Activated CD8-positive, alpha-beta memory T cell treated with anti-CD3 and anti-CD28 coated beads, Interleukin-2, amount 10 ng/mL, durations not matched to agents 7 days and 5 days (primary cell): ENCODE measurements at regions of chr1 and their contacts with region 1.

Region 1: GRCh38 chr1:180863158-180863775 is 49.4 kb upstream of the KIAA1614 start:
- DNase-seq: no peak
- ATAC-seq: no peak
- H3K4me3 Mint-ChIP-seq: no peak overlapping the region
- H3K27ac Mint-ChIP-seq: no peak overlapping the region
- H3K4me1 Mint-ChIP-seq: no peaks in the 10 kb centered on the region
- H3K27me3 Mint-ChIP-seq: no peaks in the 10 kb centered on the region

Region 2: GRCh38 chr1:180515864-180516388 is 347.3 kb before region 1 on chr1:
- CTCF ChIA-PET with region 1: interaction called, 69 read pairs
- DNase-seq: peak; percentile 68
- ATAC-seq: peak; percentile 98
- H3K4me3 Mint-ChIP-seq: no peak overlapping the region
- H3K27ac Mint-ChIP-seq: no peak overlapping the region
- H3K4me1 Mint-ChIP-seq: peaks cover 5% of the 10 kb centered on the region
- H3K27me3 Mint-ChIP-seq: peaks cover 8% of the 10 kb centered on the region

Region 3: DNA sequence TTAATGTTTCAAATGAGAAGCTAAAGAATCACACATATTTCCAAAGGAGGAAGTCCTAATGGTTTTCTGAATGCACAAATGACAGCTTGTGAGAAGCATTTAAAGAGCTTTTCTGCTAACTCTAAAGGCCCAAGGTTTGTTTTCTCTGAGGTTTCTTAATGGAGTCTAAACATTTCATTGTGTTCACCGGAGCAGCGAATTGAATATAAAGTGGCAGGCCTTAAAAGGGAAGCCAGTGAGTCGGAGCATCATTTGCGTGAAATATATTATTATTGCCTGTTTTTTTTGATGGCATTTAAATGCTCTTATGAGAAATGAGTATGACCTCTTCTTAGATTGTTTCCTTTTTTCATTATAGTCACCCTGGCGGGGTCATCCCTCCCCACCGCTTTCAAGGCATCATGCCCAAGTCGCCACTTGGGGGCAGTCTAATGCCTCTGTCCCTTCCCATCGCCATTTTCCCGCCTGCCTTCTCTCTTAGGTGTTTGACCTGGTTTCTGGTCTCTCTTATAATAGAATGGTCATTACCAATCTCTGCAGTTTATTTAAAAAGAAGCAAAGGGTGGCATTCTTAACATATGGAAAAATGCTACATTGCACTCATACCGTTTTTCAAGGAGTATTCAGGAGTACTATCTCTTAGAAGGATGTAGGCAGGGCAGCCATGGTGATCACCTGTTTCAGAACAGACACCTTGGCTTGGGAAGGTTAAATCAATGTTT is 329.8 kb before region 1 on chr1:
- CTCF ChIA-PET with region 1: interaction called, 78 read pairs
- DNase-seq: peak; percentile 78
- ATAC-seq: peak; percentile 70
- H3K4me3 Mint-ChIP-seq: no peak overlapping the region
- H3K27ac Mint-ChIP-seq: no peak overlapping the region
- H3K4me1 Mint-ChIP-seq: no peaks in the 10 kb centered on the region
- H3K27me3 Mint-ChIP-seq: peaks cover 30% of the 10 kb centered on the region

Region 4: GRCh38 chr1:180586671-180587155 is 276.6 kb before region 1 on chr1:
- CTCF ChIA-PET with region 1: interaction called, 11 read pairs
- DNase-seq: no peak
- ATAC-seq: no peak
- H3K4me3 Mint-ChIP-seq: no peak overlapping the region
- H3K27ac Mint-ChIP-seq: peak overlapping the region; percentile 67
- H3K4me1 Mint-ChIP-seq: peaks cover 24% of the 10 kb centered on the region
- H3K27me3 Mint-ChIP-seq: peaks cover 4% of the 10 kb centered on the region

Region 5: GRCh38 chr1:180631766-180632325 is 231.4 kb before region 1 on chr1 and contains the start of gene XPR1:
- CTCF ChIA-PET with region 1: interaction called, 10 read pairs
- DNase-seq: peak; percentile 99
- ATAC-seq: peak; percentile 98
- H3K4me3 Mint-ChIP-seq: no peak within 1 kb of the TSS
- H3K27ac Mint-ChIP-seq: peak within 1 kb of the TSS; percentile 86
- H3K4me1 Mint-ChIP-seq: peaks cover 6% of the 10 kb centered on the region
- H3K27me3 Mint-ChIP-seq: peaks cover 5% of the 10 kb centered on the region
- total RNA-seq, gene XPR1: 17.6 to 21.9 TPM

Region 6: DNA sequence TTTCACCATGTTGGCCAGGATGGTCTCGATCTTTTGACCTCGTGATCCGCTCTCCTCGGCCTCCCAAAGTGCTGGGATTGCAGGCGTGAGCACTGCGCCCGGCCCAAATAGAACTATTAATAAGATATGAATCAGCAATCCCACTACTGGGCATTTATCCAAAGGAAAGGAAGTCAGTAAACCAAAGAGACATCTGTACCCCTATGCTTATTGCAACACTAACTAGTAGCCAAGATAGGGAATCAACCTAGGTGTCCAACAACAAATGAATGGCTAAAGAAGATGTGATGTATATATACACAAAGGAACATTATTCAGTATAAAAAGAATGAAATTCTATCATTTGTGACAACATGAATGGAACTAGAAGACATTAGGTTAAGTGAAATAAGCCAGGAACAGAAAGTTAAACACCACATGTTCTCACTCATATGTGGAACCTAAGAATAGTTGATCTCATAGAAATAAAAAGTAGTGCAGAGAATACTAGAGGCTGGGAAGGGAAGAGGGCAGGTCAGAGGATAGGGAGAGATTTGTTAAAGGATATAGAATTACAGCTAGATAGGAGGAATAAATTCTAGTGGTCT is 182.6 kb before region 1 on chr1:
- CTCF ChIA-PET with region 1: no interaction called
- DNase-seq: no peak
- ATAC-seq: no peak
- H3K4me3 Mint-ChIP-seq: no peak overlapping the region
- H3K27ac Mint-ChIP-seq: no peak overlapping the region
- H3K4me1 Mint-ChIP-seq: no peaks in the 10 kb centered on the region
- H3K27me3 Mint-ChIP-seq: no peaks in the 10 kb centered on the region

Region 7: GRCh38 chr1:180851995-180852887 is 11.0 kb before region 1 on chr1:
- CTCF ChIA-PET with region 1: interaction called, 16 read pairs
- DNase-seq: no peak
- ATAC-seq: peak; percentile 36
- H3K4me3 Mint-ChIP-seq: no peak overlapping the region
- H3K27ac Mint-ChIP-seq: no peak overlapping the region
- H3K4me1 Mint-ChIP-seq: peaks cover 14% of the 10 kb centered on the region
- H3K27me3 Mint-ChIP-seq: no peaks in the 10 kb centered on the region

Region 8: GRCh38 chr1:180881806-180882509 is 18.7 kb after region 1 on chr1:
- CTCF ChIA-PET with region 1: interaction called, 12 read pairs
- DNase-seq: no peak
- ATAC-seq: peak; percentile 58
- H3K4me3 Mint-ChIP-seq: no peak overlapping the region
- H3K27ac Mint-ChIP-seq: no peak overlapping the region
- H3K4me1 Mint-ChIP-seq: peaks cover 2% of the 10 kb centered on the region
- H3K27me3 Mint-ChIP-seq: no peaks in the 10 kb centered on the region